Astrocyte of the cerebellum (primary cell): ENCODE measurements at regions of chr20 and their contacts with region 1.

Region 1: DNA sequence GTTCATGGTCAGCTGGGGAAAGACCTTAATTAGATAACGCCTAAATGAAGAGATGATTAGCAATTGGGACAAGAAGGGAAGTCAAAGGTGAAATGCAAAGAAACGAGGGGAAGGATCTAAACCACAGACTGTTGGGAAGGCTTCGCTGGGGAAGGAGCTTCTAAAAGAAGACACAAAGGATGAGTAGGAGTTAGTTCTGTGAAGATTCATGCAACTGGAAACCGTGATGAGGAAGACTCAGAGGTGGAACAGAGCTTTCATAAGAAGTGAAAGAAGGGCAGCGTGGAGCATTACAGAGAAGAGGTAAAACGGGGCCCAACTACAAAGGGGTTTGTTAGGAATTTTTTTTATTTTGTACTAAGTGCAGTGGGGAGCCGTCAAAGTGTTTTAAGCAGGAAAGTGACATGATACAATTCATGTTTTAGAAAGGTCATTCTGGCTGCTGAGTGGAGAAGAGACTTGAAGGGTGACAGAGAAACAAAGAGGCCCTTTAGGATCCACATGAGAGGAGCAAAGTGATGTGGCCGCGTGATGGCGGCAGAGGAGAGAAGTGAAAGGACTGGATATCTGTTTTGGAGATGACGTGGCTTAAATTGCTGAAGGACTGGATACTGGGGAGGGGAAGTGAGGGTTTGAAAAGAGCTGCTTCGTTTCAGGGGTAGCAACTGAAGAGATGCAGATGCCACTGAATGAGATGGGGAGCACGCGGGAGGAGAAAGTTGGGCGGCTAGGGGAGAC is 33.6 kb downstream of the TTI1 start:
- DNase-seq: no peak
- H3K4me3 ChIP-seq: no peak overlapping the region
- CTCF ChIP-seq: no peak

Region 2: DNA sequence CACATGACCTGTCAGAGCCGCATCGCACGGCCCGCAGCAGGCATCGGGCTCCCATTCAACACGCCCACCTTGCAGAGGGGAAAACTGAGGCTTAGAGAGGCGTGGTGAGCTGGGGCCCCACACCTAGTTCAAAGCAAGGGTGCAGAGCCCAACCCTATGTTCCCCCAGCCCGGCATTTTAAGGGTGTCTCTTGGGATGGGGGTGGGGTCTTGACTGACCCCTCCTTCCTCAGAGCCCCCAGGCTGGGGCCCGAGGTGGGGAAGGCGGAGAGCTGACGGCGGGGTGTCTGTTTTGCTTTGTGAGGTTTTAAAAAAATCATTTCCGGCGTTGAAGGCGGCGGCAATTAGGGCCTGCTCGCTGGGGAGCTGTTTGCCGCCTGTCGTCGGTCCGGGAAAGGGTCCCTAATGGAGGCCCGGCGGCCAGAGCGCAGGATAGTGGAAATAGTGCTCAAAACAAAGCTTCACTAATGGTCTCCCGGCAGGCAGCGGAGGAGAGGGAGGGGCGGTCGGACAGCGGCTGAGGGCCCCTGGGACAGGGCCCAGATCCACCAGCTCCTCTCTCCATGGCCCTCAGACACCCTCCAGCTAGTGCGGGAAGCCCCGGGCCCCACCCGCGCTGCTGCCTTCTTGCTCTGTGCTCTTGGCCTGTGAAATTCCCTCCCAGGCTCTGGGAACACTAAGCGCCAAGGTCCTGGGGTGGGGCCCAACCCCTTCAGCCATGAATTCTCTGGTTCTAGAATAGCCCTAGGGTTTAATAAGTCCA is 84.8 kb before region 1 on chr20:
- in situ Hi-C with region 1: loop called (anchors 5 kb)
- DNase-seq: no peak
- H3K4me3 ChIP-seq: no peak overlapping the region
- CTCF ChIP-seq: no peak

Region 3: DNA sequence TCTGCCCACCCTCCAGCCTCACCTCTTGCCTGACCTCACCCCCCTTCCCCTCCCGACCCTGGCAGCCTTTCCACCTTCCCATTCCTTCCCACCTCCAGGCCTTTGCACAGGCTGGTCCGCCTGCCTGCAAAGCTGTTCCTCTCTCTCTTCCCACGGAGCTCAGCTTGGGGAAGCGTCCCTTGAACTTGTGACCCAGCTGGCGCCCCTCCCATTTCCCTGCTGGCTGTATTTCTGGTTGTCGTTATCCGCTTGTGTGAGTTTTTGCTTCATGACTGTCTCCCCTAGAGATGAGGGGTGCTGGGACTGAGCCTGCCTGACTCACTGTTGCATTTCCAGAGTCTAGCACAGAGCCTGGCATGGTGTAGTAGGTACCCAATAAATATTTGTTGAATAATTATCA is 64.3 kb before region 1 on chr20:
- in situ Hi-C with region 1: no loop called
- DNase-seq: no peak
- H3K4me3 ChIP-seq: no peak overlapping the region
- CTCF ChIP-seq: no peak

Region 4: GRCh38 chr20:37956084-37956483 is 43.6 kb before region 1 on chr20:
- in situ Hi-C with region 1: no loop called
- DNase-seq: no peak
- H3K4me3 ChIP-seq: no peak overlapping the region
- CTCF ChIP-seq: no peak

Region 5: DNA sequence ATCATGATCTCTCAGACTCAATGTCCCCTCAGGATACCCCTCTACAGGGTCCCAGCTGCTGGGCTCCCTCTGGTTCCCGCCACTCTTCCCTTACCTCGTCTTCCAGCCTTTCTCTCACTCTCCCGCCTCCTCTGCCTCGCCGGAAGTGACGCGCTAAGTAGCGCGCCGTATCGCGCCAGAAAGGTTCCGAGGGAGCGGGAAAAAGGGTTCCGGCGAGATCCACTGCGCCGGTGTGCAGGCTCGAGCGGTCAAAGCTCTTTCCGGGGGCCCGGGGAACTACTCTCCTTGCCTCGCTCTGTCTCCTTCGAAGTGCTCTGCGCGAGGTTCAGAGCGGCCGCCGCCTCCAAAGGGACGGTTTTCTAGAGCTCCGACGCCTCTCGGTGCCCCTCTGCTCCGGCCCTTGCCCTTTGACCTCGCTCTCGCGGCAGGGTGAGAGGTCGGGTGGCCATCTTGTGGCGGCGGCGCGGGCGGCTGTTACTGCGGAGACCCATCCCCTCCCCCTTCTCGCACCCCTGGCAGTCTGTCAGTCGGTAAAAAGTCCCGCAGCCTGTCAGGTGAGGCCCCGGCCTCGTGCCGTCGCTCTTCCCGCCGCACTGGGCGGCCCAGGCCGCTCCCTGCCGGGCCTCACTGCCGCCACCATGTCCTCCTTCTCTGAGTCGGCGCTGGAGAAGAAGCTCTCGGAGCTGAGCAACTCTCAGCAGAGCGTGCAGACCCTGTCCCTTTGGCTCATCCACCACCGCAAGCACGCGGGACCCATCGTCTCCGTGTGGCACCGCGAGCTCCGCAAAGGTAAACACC is 33.8 kb after region 1 on chr20 and contains the starts of genes RPRD1B and TTI1:
- in situ Hi-C with region 1: no loop called
- DNase-seq: peak; percentile 70
- H3K4me3 ChIP-seq: peak within 1 kb of the TSS; percentile 83
- CTCF ChIP-seq: no peak